Activated B cell treated with CpG ODN at 0.5 μM for 24 hours (primary cell): ENCODE measurements at regions of chr6 and their contacts with region 1.

Region 1: DNA sequence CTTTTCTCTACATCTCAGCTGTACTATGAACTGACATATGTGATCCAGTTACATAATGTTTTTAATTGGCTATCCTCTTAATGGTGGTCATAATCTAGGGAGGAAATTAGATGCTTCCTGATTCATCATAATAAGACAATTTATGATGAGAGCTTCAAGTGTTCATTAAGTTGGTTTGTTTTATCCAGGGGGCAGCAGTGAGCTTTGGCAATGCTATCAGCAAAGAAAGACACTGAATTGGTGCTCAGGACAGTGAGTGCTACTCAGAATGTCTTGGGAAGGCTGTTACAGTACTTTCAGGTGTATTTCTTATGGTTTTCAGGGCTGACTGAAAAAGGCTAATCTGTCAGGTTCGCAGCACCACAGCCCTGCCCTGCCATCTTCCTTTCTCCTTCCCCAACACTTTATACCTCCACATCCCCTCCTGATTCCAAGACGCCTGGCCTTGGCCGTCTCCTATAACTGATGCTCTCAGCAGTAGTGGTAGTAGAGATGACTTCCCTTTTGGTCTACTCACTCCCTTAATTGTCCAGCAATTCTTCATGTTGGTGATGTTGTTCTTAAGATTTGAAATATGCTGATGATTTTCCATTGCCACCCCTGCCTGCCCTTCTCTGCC is 67.0 kb upstream of the TNFAIP3 start:
- DNase-seq: no peak
- ATAC-seq: peak; percentile 91
- H3K4me3 Mint-ChIP-seq: no peak overlapping the region
- H3K27ac Mint-ChIP-seq: peak overlapping the region; percentile 65
- H3K4me1 Mint-ChIP-seq: peaks cover 29% of the 10 kb centered on the region
- H3K27me3 Mint-ChIP-seq: no peaks in the 10 kb centered on the region
- CTCF ChIP-seq: no peak

Region 2: DNA sequence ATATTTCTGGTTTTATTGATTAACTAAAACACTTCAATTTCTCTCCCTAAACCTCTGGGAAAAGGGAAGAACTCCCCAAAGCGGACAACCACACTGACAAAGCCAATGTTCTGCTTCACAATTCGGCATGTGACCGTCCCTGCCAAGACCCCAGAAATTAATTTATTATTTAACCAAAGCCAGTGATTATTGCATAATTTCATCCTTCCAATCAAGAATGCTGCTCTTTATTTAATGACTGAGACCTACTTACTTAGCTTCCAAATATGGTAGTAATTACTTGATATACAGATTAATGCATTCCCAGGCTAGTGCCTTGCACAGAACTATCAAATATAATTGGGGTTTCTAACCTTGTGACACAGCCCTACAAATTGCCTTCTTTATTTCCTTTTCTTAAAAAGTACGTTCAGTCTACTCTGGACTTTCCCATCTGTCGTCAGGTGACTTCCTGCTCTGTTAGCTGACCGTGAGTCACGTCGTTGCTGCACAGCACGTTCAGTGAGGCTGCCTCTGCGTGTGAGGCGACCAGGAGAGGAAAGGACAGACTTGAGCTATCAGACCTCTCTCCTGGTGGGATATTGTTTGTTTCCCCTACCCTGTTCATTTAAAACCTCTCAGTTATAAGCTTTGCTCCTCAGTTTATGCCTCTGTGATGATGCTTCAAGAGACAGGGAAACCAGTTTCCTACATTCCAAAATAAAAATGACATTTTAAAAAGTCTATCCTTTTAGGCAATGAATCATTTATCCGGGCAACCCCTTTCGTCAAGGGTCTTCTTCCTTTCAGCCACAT is 11.3 kb after region 1 on chr6:
- CTCF ChIA-PET with region 1: interaction called, 8 read pairs
- POLR2A ChIA-PET with region 1: interaction called, 9 read pairs
- intact Hi-C with region 1: loop called (anchors 1 kb)
- DNase-seq: peak; percentile 53
- ATAC-seq: peak; percentile 99
- H3K4me3 Mint-ChIP-seq: peak overlapping the region; percentile 69
- H3K27ac Mint-ChIP-seq: peak overlapping the region; percentile 95
- H3K4me1 Mint-ChIP-seq: peaks cover 41% of the 10 kb centered on the region
- H3K27me3 Mint-ChIP-seq: no peaks in the 10 kb centered on the region
- CTCF ChIP-seq: no peak

Region 3: DNA sequence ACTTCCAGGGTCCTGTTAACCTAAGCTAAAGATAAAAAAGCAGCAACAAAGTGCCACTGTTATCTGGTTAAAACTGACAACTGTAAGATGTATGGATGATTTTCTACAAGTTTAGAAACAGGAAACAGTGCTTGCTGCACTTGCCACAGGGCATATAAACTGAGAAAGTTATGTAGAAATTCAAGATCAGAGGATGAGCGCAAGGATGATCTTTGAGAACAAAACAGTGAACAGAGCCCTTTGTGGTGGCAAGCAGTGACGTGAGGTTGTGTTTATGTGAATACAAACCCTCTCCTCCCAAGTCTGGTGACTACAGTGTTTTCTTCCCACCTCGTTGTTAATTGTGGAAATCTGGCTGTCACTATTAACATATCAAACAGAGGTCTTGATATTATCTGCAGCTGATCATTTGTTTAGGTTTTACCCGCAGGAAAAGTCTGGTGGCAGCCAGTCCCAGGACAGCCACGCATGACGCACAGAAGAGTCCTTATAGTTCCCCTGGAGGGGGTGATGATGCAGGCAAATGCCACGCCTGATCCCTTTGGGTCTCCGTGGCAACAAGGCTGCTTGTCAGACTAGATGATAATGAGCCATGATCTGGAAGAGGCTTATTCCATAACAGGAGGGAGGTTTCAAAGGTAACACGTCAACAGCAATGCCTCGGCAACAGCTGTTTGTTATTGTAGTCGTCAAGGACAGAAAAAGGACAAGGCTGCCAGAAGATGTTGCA is 23.9 kb after region 1 on chr6:
- CTCF ChIA-PET with region 1: interaction called, 7 read pairs
- POLR2A ChIA-PET with region 1: interaction called, 6 read pairs
- intact Hi-C with region 1: loop called (anchors 1 kb)
- DNase-seq: no peak
- ATAC-seq: peak; percentile 33
- H3K4me3 Mint-ChIP-seq: peak overlapping the region; percentile 46
- H3K27ac Mint-ChIP-seq: peak overlapping the region; percentile 77
- H3K4me1 Mint-ChIP-seq: peaks cover 67% of the 10 kb centered on the region
- H3K27me3 Mint-ChIP-seq: no peaks in the 10 kb centered on the region
- CTCF ChIP-seq: no peak

Region 4: DNA sequence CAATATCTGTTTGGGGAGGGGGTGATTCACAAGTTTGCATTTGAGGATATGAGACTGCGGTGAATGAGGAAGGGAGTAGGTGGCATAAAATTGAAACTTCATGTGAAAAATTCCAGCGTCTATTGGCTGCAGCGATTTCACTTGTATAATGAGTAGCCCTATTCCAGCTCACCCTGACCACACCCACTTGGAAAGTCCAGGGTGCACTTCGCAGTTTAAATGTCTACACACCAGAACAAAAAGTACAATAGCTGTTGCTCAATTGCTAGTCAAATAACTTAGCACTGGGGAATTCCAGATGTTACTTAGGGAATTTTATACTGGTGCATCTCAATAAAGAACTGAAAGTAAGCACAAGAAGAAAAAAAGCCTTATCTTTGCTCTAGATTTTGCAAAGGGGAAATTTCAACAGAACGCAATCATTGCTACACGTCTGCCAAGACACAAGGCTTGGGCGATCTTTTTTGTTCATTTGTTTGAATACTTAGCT is 73.3 kb after region 1 on chr6:
- CTCF ChIA-PET with region 1: interaction called, 107 read pairs
- POLR2A ChIA-PET with region 1: interaction called, 59 read pairs
- intact Hi-C with region 1: no loop called
- DNase-seq: peak; percentile 50
- ATAC-seq: peak; percentile 84
- H3K4me3 Mint-ChIP-seq: peak overlapping the region; percentile 96
- H3K27ac Mint-ChIP-seq: peak overlapping the region; percentile 94
- H3K4me1 Mint-ChIP-seq: peaks cover 80% of the 10 kb centered on the region
- H3K27me3 Mint-ChIP-seq: no peaks in the 10 kb centered on the region
- CTCF ChIP-seq: no peak

Region 5: GRCh38 chr6:137938770-137939379 is 138.8 kb after region 1 on chr6:
- CTCF ChIA-PET with region 1: interaction called, 33 read pairs
- POLR2A ChIA-PET with region 1: interaction called, 3 read pairs
- intact Hi-C with region 1: loop called (anchors 1 kb)
- DNase-seq: no peak
- ATAC-seq: no peak
- H3K4me3 Mint-ChIP-seq: no peak overlapping the region
- H3K27ac Mint-ChIP-seq: no peak overlapping the region
- H3K4me1 Mint-ChIP-seq: peaks cover 18% of the 10 kb centered on the region
- H3K27me3 Mint-ChIP-seq: no peaks in the 10 kb centered on the region
- CTCF ChIP-seq: no peak

Region 6: GRCh38 chr6:137975188-137975940 is 175.3 kb after region 1 on chr6:
- CTCF ChIA-PET with region 1: interaction called, 6 read pairs
- POLR2A ChIA-PET with region 1: no interaction called
- intact Hi-C with region 1: loop called (anchors 1 kb)
- DNase-seq: no peak
- ATAC-seq: peak; percentile 40
- H3K4me3 Mint-ChIP-seq: peak overlapping the region; percentile 8
- H3K27ac Mint-ChIP-seq: peak overlapping the region; percentile 65
- H3K4me1 Mint-ChIP-seq: peaks cover 17% of the 10 kb centered on the region
- H3K27me3 Mint-ChIP-seq: no peaks in the 10 kb centered on the region
- CTCF ChIP-seq: no peak